Mammary epithelial cell (primary cell): ENCODE measurements at regions of chr17 and their contacts with region 1.

Region 1: GRCh38 chr17:82358465-82359350 is at the start of gene TEX19:
- DNase-seq: no peak
- H3K4me3 ChIP-seq: no peak within 1 kb of the TSS
- H3K27ac ChIP-seq: no peak within 1 kb of the TSS
- H3K4me1 ChIP-seq: peaks cover 16% of the 10 kb centered on the region
- H3K27me3 ChIP-seq: peaks cover 1% of the 10 kb centered on the region
- CTCF ChIP-seq: no peak
- total RNA-seq, gene TEX19: not detected

Region 2: GRCh38 chr17:82281502-82282238 is 77.0 kb before region 1 on chr17:
- CTCF ChIA-PET with region 1: no interaction called
- dilution Hi-C with region 1: loop called (anchors 5 kb)
- in situ Hi-C with region 1: no loop called
- intact Hi-C with region 1: no loop called
- DNase-seq: peak; percentile 92
- H3K4me3 ChIP-seq: no peak overlapping the region
- H3K27ac ChIP-seq: peak overlapping the region; percentile 65
- H3K4me1 ChIP-seq: peaks cover 42% of the 10 kb centered on the region
- H3K27me3 ChIP-seq: no peaks in the 10 kb centered on the region
- CTCF ChIP-seq: no peak

Region 3: GRCh38 chr17:82407255-82407654 is 48.5 kb after region 1 on chr17:
- CTCF ChIA-PET with region 1: no interaction called
- dilution Hi-C with region 1: no loop called
- in situ Hi-C with region 1: loop called (anchors 5 to 10 kb)
- intact Hi-C with region 1: no loop called
- DNase-seq: no peak
- H3K4me3 ChIP-seq: no peak overlapping the region
- H3K27ac ChIP-seq: no peak overlapping the region
- H3K4me1 ChIP-seq: no peaks in the 10 kb centered on the region
- H3K27me3 ChIP-seq: no peaks in the 10 kb centered on the region
- CTCF ChIP-seq: no peak

Region 4: DNA sequence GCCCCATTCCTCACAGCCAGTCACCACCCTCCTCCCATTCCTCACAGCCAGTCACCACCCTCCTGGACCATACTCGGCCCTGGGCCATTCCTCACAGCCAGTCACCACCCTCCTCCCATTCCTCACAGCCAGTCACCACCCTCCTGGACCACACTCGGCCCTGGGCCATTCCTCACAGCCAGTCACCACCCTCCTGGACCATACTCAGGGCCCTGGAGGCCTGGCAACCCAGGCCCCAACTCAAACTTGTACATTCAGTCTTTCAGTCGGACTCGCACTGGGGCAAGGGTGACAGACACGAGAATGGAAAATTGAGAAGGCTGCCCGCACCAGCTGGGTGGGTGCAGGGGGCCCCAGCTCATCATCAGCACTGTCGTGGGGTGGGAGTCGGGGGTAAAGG is 130.4 kb after region 1 on chr17:
- CTCF ChIA-PET with region 1: no interaction called
- dilution Hi-C with region 1: loop called (anchors 5 kb)
- in situ Hi-C with region 1: no loop called
- intact Hi-C with region 1: no loop called
- DNase-seq: no peak
- H3K4me3 ChIP-seq: no peak overlapping the region
- H3K27ac ChIP-seq: no peak overlapping the region
- H3K4me1 ChIP-seq: peaks cover 8% of the 10 kb centered on the region
- H3K27me3 ChIP-seq: no peaks in the 10 kb centered on the region
- CTCF ChIP-seq: no peak

Region 5: DNA sequence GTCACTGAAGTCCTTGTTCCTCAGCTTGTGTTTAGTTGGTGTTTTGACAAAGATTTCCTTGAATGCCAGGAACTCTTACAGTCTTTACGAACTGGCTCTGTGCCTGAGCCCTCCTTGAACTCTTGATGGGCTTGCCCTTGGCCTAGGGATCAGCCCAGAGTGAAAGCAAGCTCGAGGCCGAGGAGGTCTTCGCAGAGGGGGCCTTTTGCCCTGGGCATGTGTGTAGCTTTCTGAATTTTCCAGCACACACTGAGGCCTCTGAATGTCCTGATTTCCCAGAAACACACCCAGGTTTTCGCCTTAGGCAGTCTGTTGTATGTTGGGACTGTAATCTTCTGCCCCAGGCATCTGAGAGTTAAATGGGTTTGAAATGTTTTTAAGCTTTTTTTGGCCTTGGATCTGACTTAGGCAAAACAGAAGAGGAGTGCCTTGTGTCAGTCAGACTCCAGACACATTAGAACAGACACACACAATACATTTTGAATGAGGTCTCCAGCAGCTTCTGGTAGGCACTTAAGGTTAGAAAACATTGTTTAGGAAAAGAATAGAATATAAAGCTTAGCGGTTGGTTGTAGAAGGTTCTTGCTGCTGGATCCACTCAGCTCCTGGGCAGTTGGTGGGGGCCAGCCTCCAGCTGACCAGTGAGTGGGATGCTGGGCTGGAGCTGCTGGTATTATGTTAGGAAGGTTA is 177.9 kb after region 1 on chr17:
- CTCF ChIA-PET with region 1: no interaction called
- dilution Hi-C with region 1: no loop called
- in situ Hi-C with region 1: no loop called
- intact Hi-C with region 1: no loop called
- DNase-seq: peak; percentile 32
- H3K4me3 ChIP-seq: no peak overlapping the region
- H3K27ac ChIP-seq: peak overlapping the region; percentile 82
- H3K4me1 ChIP-seq: peaks cover 41% of the 10 kb centered on the region
- H3K27me3 ChIP-seq: no peaks in the 10 kb centered on the region
- CTCF ChIP-seq: no peak

Region 6: DNA sequence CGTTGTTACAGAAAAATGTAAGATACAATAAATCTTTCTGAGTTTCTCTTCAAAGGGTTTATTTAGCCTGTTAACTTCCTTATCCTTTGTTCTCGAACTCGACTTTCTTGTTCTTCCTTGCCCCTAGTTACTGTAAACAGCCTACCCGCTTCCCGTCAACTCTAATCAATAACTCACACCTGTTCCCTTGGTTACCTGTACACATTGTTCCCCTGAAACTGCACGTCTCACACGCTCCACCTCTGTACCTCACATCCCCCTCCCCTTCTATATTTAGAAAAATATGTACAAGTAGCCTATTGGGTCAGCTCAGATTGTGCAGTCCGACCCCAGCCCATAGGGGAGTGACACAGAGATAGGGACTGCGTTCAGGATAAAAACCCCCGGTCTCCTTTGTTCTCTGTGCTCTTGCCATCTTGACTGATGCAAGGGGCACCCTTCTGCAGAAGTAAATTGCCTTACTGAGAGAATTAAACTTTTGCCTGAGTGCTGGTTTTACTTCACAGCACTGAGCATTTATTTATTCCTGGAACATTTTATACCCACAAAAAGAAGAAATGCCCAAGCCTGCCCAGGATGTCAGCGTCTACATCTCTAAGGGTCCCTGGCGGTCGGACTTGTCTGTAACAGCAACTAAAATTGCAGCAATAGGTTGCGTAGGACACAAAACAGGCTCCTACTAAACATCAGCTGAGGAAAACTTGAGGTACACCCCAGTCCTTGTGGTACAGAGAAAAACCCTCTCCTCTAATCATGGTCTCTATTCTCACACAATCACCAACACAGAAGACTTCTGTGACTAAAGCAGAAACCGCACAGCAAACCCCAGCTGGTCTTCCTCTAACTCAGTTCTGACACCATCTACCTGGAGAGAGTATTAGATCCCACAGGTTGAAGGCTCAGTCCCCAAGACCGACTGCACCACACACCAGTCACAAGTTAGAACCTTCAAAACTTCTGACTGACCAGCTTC is 278.2 kb after region 1 on chr17:
- CTCF ChIA-PET with region 1: no interaction called
- dilution Hi-C with region 1: loop called (anchors 5 kb)
- in situ Hi-C with region 1: no loop called
- intact Hi-C with region 1: no loop called
- DNase-seq: peak; percentile 6
- H3K4me3 ChIP-seq: no peak overlapping the region
- H3K27ac ChIP-seq: no peak overlapping the region
- H3K4me1 ChIP-seq: no peaks in the 10 kb centered on the region
- H3K27me3 ChIP-seq: no peaks in the 10 kb centered on the region
- CTCF ChIP-seq: no peak

Region 7: DNA sequence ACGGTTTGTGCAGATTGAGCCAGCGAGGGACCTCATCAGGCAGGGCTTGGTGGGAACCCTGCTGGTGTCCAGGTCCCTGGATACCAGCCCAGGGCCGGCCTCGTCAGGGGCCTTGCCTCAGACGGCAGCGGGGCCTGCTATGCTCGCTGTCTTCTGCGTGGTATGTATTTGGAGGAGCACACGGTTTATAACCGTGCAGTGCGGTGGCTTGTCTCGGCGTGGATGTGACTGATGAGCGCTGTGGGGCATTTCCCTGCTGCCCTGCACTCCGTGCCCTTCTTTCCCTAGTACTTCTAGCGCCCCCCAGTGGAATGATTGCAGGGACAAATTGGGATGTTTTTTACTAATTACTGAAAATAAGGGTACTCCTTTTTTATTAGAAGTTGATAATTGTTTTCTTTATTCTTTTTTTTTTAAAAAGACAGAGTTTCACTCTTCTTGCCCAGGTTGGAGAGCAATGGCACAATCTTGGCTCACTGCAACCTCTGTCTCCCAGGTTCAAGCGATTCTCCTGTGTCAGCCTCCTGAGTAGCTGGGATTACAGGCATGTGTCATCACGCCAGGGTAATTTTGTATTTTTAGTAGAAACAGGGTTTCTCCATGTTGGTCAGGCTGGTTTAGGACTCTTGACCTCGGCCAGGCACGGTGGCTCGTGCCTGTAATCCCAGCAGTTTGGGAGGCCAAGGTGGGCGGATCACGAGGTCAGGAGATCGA is 408.5 kb after region 1 on chr17:
- CTCF ChIA-PET with region 1: no interaction called
- dilution Hi-C with region 1: loop called (anchors 5 kb)
- in situ Hi-C with region 1: loop called in 1 of 2 experiments (anchors 10 kb)
- intact Hi-C with region 1: loop called (anchors 5 kb)
- DNase-seq: peak; percentile 30
- H3K4me3 ChIP-seq: no peak overlapping the region
- H3K27ac ChIP-seq: no peak overlapping the region
- H3K4me1 ChIP-seq: no peaks in the 10 kb centered on the region
- H3K27me3 ChIP-seq: no peaks in the 10 kb centered on the region
- CTCF ChIP-seq: peak; percentile 67 to 70